ENCODE measurements at regions of chr1 and their contacts with region 1.

Region 1: GRCh38 chr1:36223993-36224536 is at the start of gene THRAP3:
- DNase-seq: peak; percentile 100
- ATAC-seq: peak; percentile 93
- H3K4me3 Mint-ChIP-seq: peak within 1 kb of the TSS; percentile 96
- H3K27ac Mint-ChIP-seq: peak within 1 kb of the TSS; percentile 100
- H3K4me1 Mint-ChIP-seq: peaks cover 28% of the 10 kb centered on the region
- H3K27me3 Mint-ChIP-seq: no peaks in the 10 kb centered on the region
- total RNA-seq, gene THRAP3: 149 to 182 TPM

Region 2: DNA sequence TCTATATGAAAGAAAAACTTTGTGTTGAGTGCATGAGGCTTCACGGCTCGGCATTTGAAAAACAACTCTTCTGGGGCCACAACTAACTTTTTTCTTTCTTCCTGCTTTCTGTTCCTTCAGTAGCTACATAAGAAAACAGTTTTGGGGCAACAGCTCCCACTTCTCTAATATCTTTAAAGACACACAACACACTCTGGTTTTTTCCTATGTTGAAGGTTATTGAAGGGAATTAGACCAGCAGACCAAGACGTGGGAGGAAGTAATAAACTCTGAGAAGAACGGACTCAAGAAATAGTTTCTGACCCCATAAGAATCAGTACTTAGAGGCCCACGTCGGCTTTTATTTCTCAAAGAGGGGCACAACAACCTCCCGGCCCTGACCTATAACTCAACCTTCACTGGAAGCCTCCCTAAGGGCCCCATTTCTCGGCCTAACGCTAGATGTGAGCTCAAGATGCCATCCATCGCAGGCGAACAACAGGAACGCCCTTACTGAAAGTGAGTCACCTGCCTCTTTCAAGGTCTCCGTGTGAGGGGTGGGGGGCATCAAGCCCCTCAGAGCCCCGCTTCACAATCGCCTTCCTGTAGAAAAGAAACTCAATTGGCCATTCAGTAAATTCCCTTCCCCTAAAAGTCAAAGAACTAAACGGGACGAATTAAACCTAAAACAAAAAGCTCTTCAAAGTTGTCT is 1193.2 kb before region 1 on chr1:
- CTCF ChIA-PET with region 1: no interaction called
- POLR2A ChIA-PET with region 1: no interaction called
- intact Hi-C with region 1: loop called in 1 of 2 experiments (anchors 1 kb)
- DNase-seq: peak; percentile 63
- ATAC-seq: peak; percentile 70
- H3K4me3 Mint-ChIP-seq: peak overlapping the region; percentile 92
- H3K27ac Mint-ChIP-seq: peak overlapping the region; percentile 92
- H3K4me1 Mint-ChIP-seq: peaks cover 33% of the 10 kb centered on the region
- H3K27me3 Mint-ChIP-seq: no peaks in the 10 kb centered on the region

Region 3: DNA sequence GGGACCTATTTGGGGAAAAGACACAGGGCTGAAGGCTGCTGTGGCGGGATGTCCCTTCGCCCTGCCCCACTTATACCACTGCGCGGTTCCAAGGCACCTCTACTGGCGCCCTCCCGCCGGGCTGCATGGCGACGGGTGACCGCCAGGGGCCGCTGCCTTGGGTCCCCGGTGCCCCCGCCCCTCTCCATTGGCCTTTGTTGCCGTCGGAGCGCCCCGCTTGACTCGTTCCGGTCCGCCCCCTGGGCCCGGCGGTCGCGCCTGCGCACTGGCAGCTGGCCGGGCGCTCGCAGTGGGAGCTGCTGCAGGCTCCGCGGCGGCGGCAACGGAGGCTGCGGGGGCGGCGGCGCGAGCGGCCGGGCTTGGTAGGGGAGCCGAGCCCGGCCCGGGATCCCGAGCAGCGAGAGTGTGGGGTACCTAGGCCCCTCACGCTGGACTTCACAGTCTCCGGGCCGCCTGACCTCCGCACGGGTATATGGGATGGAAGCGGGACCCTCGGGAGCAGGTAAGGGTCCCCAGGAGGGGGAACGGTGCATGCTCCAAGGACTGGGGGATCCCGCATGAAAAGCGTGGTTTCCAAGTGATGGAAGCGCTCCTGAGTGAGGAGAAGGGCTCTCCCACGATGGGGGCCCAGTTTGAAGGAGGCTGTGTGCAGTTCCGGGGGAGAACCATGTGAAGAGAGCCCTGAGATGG is 341.0 kb before region 1 on chr1 and contains the start of gene AGO1:
- CTCF ChIA-PET with region 1: no interaction called
- POLR2A ChIA-PET with region 1: no interaction called
- intact Hi-C with region 1: loop called in 1 of 2 experiments (anchors 1 kb)
- DNase-seq: peak; percentile 98
- ATAC-seq: peak; percentile 95
- H3K4me3 Mint-ChIP-seq: peak within 1 kb of the TSS; percentile 91
- H3K27ac Mint-ChIP-seq: peak within 1 kb of the TSS; percentile 73
- H3K4me1 Mint-ChIP-seq: peaks cover 46% of the 10 kb centered on the region
- H3K27me3 Mint-ChIP-seq: no peaks in the 10 kb centered on the region
- total RNA-seq, gene AGO1: 31.5 to 34.6 TPM

Region 4: GRCh38 chr1:36149237-36149972 is 74.7 kb before region 1 on chr1 and contains the start of gene TRAPPC3:
- CTCF ChIA-PET with region 1: interaction called, 32 read pairs
- POLR2A ChIA-PET with region 1: interaction called, 17 read pairs
- intact Hi-C with region 1: loop called (anchors 1 kb)
- DNase-seq: peak; percentile 100
- ATAC-seq: peak; percentile 93
- H3K4me3 Mint-ChIP-seq: peak within 1 kb of the TSS; percentile 95
- H3K27ac Mint-ChIP-seq: peak within 1 kb of the TSS; percentile 94
- H3K4me1 Mint-ChIP-seq: peaks cover 67% of the 10 kb centered on the region
- H3K27me3 Mint-ChIP-seq: no peaks in the 10 kb centered on the region
- total RNA-seq, gene TRAPPC3: 43.8 to 53.8 TPM

Region 5: DNA sequence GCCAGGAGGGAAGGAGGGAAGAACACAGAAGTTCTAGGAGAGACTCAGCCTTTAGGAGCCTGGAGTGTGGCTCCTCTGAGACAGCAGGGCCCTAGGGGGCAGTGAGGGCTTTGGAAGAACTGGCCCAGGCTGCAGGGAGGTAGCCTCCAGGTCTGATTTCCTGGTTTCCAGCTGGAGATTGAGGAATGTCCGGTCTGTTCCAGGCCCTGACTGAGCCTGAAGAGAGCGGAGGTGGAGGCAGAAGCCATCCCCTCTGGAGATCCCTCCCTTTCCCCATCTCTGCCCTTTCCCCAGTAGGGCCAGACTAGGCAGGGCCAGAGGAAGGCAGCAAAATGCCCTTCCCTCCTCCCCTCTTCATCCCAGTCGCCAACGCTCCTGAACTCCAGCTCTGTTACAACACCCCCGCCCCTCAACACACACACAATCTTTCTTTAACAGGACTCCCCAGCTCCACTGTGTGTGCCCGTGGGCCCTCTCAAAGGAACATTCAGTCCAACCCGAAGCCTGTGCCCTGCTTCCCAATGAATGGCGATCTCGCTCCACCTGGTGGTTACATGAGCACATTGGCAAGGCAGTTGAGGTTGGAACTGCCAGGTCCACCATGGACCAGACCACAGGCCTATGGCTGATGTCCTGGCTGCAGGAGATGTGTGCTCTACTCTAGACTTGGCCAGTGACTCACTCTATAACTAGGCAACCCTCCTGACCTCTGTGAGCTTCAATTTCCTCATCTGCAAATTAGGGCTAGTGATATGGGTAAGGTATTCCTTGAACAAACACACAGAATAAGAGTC is 36.1 kb before region 1 on chr1:
- CTCF ChIA-PET with region 1: interaction called, 5 read pairs
- POLR2A ChIA-PET with region 1: interaction called, 3 read pairs
- intact Hi-C with region 1: loop called in 1 of 2 experiments (anchors 1 kb)
- DNase-seq: peak; percentile 87
- ATAC-seq: peak; percentile 99
- H3K4me3 Mint-ChIP-seq: no peak overlapping the region
- H3K27ac Mint-ChIP-seq: peak overlapping the region; percentile 56
- H3K4me1 Mint-ChIP-seq: peaks cover 4% of the 10 kb centered on the region
- H3K27me3 Mint-ChIP-seq: no peaks in the 10 kb centered on the region

Region 6: GRCh38 chr1:36300526-36300925 is 76.5 kb after region 1 on chr1:
- CTCF ChIA-PET with region 1: interaction called, 3 read pairs
- POLR2A ChIA-PET with region 1: interaction called, 8 read pairs
- intact Hi-C with region 1: loop called in 1 of 2 experiments (anchors 1 kb)
- DNase-seq: peak; percentile 49
- ATAC-seq: peak; percentile 72
- H3K4me3 Mint-ChIP-seq: peak overlapping the region; percentile 3
- H3K27ac Mint-ChIP-seq: peak overlapping the region; percentile 87
- H3K4me1 Mint-ChIP-seq: peaks cover 64% of the 10 kb centered on the region
- H3K27me3 Mint-ChIP-seq: no peaks in the 10 kb centered on the region

Region 7: GRCh38 chr1:36397378-36398230 is 173.5 kb after region 1 on chr1 and contains the start of gene LSM10:
- CTCF ChIA-PET with region 1: no interaction called
- POLR2A ChIA-PET with region 1: no interaction called
- intact Hi-C with region 1: loop called in 1 of 2 experiments (anchors 1 kb)
- DNase-seq: peak; percentile 96
- ATAC-seq: peak; percentile 89
- H3K4me3 Mint-ChIP-seq: peak within 1 kb of the TSS; percentile 90
- H3K27ac Mint-ChIP-seq: peak within 1 kb of the TSS; percentile 99
- H3K4me1 Mint-ChIP-seq: peaks cover 25% of the 10 kb centered on the region
- H3K27me3 Mint-ChIP-seq: no peaks in the 10 kb centered on the region
- total RNA-seq, gene LSM10: 40.6 to 44.0 TPM